ENCODE measurements at regions of chr16 and their contacts with region 1.

Region 1: DNA sequence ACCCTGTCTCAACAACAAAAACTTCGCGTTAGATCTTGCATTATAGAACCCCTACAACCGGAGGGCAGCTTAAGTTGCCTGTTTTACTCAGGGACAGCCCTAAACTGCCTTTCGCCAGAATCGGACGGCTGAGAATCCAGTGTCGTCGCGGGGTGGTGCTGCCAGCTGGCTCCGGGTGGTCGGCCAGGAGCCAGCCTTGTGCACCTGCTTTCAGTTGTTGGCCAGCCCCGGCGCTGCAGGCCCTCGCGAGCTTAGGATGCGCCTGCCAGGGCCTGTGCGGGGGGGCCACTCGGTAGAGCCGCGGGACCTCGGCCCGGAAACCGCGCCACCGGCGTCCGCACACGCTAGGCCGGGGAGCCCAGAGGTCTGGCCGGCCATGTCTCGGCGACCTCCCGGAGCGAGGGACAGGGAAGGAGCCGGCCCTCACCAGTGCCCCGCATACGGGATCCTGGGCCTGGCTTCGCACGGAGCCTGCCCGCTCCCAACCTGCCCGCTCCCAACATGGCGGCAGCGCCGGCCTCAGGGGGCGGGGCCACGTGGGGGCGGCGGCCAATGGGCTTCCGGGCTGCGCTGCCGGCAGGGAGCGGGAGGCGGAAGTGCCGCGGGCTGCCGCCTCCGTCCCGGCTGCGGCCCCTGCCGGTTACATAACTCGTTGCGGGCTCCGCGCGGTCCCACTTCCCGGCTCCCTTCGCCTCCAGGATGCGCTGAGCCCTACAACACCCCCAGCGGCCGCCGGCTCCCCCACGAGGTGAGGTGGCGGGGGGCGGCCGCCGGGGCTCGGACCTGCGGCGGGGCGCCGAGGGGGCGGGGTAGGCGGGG is 14.2 kb downstream of the NAA60 start:
- DNase-seq: peak; percentile 96
- ATAC-seq: peak; percentile 94
- H3K4me3 ChIP-seq: peak overlapping the region; percentile 48 to 86 (median 73)
- H3K4me3 Mint-ChIP-seq: peak overlapping the region; percentile 84
- H3K27ac ChIP-seq: peak overlapping the region; percentile 87 to 95
- H3K27ac Mint-ChIP-seq: peak overlapping the region; percentile 90
- H3K4me1 ChIP-seq: peaks cover 28 to 39% of the 10 kb centered on the region in 2 donors
- H3K4me1 Mint-ChIP-seq: peaks cover 50% of the 10 kb centered on the region
- H3K27me3 ChIP-seq: no peaks in the 10 kb centered on the region
- H3K27me3 Mint-ChIP-seq: no peaks in the 10 kb centered on the region
- CTCF ChIP-seq: peak; percentile 63

Region 2: DNA sequence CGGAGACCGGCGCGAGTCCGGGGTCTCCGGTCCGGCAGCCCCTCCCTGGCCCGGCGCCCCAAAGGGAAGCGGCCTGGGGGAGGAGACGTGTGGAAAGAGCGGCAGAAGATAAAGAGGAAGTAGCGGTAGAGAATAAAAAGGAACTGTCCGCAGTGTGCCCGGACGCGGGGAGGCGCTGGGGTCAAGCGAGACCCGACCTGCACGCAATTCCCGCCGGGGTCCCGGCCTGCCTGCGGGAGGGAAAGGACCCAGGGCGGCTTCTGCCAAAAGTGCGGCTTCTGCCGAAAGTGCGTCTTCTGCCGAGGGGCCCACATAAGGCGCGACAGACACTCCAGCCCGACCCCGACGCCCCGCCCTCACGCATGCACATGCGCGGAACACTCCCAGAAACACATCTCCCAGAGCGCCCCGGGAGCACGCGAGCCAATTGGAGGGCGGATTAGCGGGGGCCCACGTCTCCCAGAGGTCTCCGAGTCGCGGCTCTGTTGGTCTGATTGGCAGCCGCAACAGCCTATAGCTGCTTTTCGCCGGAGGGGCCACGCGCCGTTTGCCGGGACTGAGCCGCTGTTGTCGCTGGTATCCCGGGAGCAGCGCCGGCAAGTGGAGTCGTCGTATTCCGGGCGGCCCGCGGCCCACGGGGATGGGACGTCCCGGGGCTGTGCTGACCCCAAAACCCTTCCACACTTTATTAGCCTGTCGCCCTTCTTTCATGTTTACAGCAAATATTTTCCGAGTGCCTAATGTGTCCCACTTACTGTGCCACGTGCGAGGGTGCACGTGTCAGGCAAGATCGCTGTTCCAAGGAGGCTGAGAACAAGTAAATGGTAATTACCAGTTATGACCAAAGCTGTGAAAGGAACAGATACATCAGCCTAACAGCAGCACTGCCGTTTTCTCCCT is 193.3 kb before region 1 on chr16:
- CTCF ChIA-PET with region 1: interaction called, 4 read pairs
- POLR2A ChIA-PET with region 1: interaction called, 4 read pairs
- intact Hi-C with region 1: loop called (anchors 1 kb)
- DNase-seq: peak; percentile 97
- ATAC-seq: peak; percentile 86
- H3K4me3 ChIP-seq: peak overlapping the region; percentile 75 to 84 (median 78)
- H3K4me3 Mint-ChIP-seq: peak overlapping the region; percentile 92
- H3K27ac ChIP-seq: peak overlapping the region; percentile 85 to 86
- H3K27ac Mint-ChIP-seq: peak overlapping the region; percentile 95
- H3K4me1 ChIP-seq: peaks cover 9 to 18% of the 10 kb centered on the region in 2 donors
- H3K4me1 Mint-ChIP-seq: peaks cover 28% of the 10 kb centered on the region
- H3K27me3 ChIP-seq: no peaks in the 10 kb centered on the region
- H3K27me3 Mint-ChIP-seq: no peaks in the 10 kb centered on the region
- CTCF ChIP-seq: peak; percentile 54

Region 3: GRCh38 chr16:3408561-3409197 is 49.0 kb before region 1 on chr16:
- CTCF ChIA-PET with region 1: no interaction called
- POLR2A ChIA-PET with region 1: no interaction called
- intact Hi-C with region 1: no loop called
- DNase-seq: no peak
- ATAC-seq: no peak
- H3K4me3 ChIP-seq: peak overlapping the region in 1 of 5 experiments; percentile 5
- H3K4me3 Mint-ChIP-seq: no peak overlapping the region
- H3K27ac ChIP-seq: no peak overlapping the region
- H3K27ac Mint-ChIP-seq: no peak overlapping the region
- H3K4me1 ChIP-seq: peaks cover 0 to 3% of the 10 kb centered on the region in 2 donors
- H3K4me1 Mint-ChIP-seq: peaks cover 8% of the 10 kb centered on the region
- H3K27me3 ChIP-seq: peaks cover 0 to 7% (median 0%) of the 10 kb centered on the region in 4 experiments
- H3K27me3 Mint-ChIP-seq: no peaks in the 10 kb centered on the region
- CTCF ChIP-seq: no peak

Region 4: DNA sequence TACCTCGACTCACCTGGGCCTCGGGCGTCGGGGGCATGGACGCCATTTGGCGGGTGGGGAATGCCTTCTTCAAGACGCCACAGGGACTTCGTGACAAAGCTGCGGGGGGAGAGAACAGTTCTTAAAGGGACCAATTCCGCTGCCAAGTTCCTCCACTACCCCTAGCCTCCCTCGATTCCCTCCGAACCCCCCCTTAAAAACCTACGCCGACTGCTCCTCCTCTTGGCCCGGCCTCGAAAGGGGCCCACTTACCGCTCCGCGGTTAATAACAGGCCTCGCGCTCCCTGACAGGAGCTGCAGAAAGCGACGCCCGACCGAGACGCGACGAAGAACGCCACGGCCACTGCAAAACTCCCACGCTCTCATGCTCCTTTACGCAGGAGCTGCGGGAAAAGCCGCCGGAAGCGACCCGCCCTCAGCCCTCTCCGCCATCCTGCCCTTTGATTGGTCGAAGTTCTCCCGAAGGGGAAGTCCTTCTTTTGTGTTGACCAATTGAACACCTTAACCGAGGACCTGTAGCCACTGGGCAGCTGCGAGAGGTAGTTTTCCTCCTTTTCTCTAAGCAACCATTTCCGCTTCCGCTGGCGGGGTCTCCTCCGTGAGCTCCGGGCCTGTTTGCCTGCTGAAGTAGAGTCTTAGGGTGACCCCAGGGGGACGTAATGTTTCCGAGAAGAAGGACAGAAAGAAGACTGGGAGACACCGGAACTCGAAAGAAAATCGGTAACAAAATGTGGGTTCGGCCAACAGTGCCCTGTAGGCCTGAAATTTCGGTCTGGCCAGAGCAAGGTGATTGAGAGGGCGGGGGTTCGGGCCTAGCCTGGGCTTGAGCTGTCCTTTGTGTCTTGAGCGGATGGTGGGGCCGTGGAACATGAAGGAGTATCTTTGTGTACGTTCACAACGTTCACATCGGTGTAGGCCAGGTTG is 14.3 kb before region 1 on chr16 and contains the starts of genes NAA60 and ZNF597:
- CTCF ChIA-PET with region 1: interaction called, 4 read pairs
- POLR2A ChIA-PET with region 1: interaction called, 7 read pairs
- intact Hi-C with region 1: loop called (anchors 1 kb)
- DNase-seq: peak; percentile 86
- ATAC-seq: peak; percentile 98
- H3K4me3 ChIP-seq: peak within 1 kb of the TSS; percentile 53 to 79 (median 62)
- H3K4me3 Mint-ChIP-seq: peak within 1 kb of the TSS; percentile 95
- H3K27ac ChIP-seq: peak within 1 kb of the TSS; percentile 34 to 83
- H3K27ac Mint-ChIP-seq: peak within 1 kb of the TSS; percentile 91
- H3K4me1 ChIP-seq: peaks cover 11% of the 10 kb centered on the region in 2 donors
- H3K4me1 Mint-ChIP-seq: peaks cover 21% of the 10 kb centered on the region
- H3K27me3 ChIP-seq: no peaks in the 10 kb centered on the region
- H3K27me3 Mint-ChIP-seq: peaks cover 3% of the 10 kb centered on the region
- CTCF ChIP-seq: no peak
- total RNA-seq, gene NAA60: 50.9 and 52.9 TPM in 2 replicates
- total RNA-seq, gene ZNF597: 4.6 and 5.0 TPM in 2 replicates

Region 5: GRCh38 chr16:3503523-3503922 is 45.9 kb after region 1 on chr16:
- CTCF ChIA-PET with region 1: no interaction called
- POLR2A ChIA-PET with region 1: interaction called, 4 read pairs
- intact Hi-C with region 1: loop called (anchors 1 kb)
- DNase-seq: no peak
- ATAC-seq: no peak
- H3K4me3 ChIP-seq: no peak overlapping the region
- H3K4me3 Mint-ChIP-seq: peak overlapping the region; percentile 32
- H3K27ac ChIP-seq: no peak overlapping the region
- H3K27ac Mint-ChIP-seq: no peak overlapping the region
- H3K4me1 ChIP-seq: peaks cover 11 to 22% of the 10 kb centered on the region in 2 donors
- H3K4me1 Mint-ChIP-seq: peaks cover 30% of the 10 kb centered on the region
- H3K27me3 ChIP-seq: no peaks in the 10 kb centered on the region
- H3K27me3 Mint-ChIP-seq: no peaks in the 10 kb centered on the region
- CTCF ChIP-seq: no peak

Region 6: GRCh38 chr16:3611146-3611975 is 153.7 kb after region 1 on chr16 and contains the start of gene SLX4:
- CTCF ChIA-PET with region 1: no interaction called
- POLR2A ChIA-PET with region 1: no interaction called
- intact Hi-C with region 1: loop called (anchors 5 kb)
- DNase-seq: peak; percentile 96
- ATAC-seq: peak; percentile 86
- H3K4me3 ChIP-seq: peak within 1 kb of the TSS; percentile 75 to 89 (median 84)
- H3K4me3 Mint-ChIP-seq: peak within 1 kb of the TSS; percentile 99
- H3K27ac ChIP-seq: peak within 1 kb of the TSS; percentile 72 to 88
- H3K27ac Mint-ChIP-seq: peak within 1 kb of the TSS; percentile 98
- H3K4me1 ChIP-seq: peaks cover 30 to 38% of the 10 kb centered on the region in 2 donors
- H3K4me1 Mint-ChIP-seq: peaks cover 61% of the 10 kb centered on the region
- H3K27me3 ChIP-seq: no peaks in the 10 kb centered on the region
- H3K27me3 Mint-ChIP-seq: no peaks in the 10 kb centered on the region
- CTCF ChIP-seq: no peak
- total RNA-seq, gene SLX4: 13.3 and 14.4 TPM in 2 replicates

Measured in B cell (primary cell).